GM13977 (cell line): ENCODE measurements at regions of chr1 and their contacts with region 1.

Region 1: DNA sequence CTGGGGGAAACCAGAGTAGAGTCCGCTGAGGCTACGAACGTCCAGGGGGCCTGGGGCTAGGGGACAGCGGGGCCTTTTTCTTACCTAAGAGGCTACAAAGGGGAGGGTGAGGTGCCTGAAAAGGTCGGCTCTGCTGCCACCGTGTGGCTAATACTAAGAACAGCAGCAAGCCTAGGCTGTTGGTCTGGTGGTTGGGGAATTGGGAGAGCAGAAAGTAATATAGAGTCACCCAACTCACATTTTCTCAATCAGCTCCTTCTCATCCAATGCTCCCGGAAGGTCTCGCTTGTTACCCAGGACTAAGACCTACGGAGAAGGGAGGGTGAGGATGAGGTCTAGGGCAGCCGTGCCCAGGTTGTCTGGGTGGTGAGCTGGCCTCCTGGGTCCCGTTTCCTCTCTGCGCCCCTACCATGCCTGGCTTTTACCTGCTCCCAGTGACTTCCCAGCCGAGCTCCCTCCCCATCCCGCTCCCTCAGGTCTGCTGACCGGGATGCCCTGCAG is 9.3 kb downstream of the ARL8A start:
- DNase-seq: peak; percentile 93
- CTCF ChIP-seq: peak; percentile 87

Region 2: DNA sequence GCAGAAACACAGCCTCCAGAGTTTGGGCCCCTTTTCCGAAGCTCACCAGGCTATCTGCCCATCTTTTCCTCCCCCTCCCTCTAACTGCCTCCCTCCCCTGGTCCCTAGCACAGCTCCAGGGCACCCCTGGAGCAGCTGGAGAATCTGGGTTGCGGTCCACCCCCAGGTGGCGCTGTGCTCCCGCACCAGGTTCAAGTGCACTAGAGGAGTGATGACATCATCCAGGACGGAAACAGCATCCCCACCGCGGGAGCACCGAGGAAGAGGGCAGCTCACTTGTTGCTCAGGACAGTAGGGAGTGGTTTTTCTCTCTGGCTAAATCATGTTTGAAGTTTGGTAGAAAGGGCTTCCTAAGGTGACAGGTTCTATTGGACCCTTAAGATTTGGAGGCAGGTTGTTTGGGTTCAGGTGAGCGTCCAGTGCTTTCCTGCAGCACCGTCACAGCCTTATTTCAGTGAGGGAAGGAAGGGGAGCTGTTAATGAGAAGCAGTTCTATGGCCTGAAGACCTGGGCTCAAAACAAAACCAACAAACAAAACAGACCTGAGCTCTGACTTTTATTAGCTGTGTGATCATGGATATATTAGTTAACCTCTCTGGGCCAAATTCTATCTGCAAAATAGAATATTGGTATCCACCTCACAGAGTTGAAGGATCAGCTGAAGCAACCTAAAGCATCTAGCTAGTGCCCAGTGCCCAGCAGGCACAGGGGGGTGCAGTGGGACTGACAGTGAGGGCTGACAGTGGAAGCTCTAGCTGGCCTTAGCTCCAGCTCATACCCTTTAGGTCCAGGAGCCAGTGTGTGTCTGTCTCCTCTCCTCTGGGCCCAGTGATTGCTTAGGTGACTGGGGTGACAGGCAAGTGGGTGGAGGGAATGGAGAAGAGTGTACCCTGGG is 239.1 kb before region 1 on chr1:
- in situ Hi-C with region 1: loop called (anchors 10 kb)
- DNase-seq: peak; percentile 88
- CTCF ChIP-seq: peak; percentile 90

Region 3: GRCh38 chr1:202164271-202165037 is 29.2 kb after region 1 on chr1:
- in situ Hi-C with region 1: no loop called
- DNase-seq: peak; percentile 87
- CTCF ChIP-seq: no peak